GM10248 (cell line): ENCODE measurements at regions of chr11 and their contacts with region 1.

Region 1: GRCh38 chr11:10653926-10654810 is 39.4 kb downstream of the IRAG1 start:
- DNase-seq: peak; percentile 70
- CTCF ChIP-seq: peak; percentile 54

Region 2: GRCh38 chr11:10225553-10225952 is 428.6 kb before region 1 on chr11:
- CTCF ChIA-PET with region 1: no interaction called
- POLR2A ChIA-PET with region 1: no interaction called
- DNase-seq: no peak
- CTCF ChIP-seq: no peak

Region 3: DNA sequence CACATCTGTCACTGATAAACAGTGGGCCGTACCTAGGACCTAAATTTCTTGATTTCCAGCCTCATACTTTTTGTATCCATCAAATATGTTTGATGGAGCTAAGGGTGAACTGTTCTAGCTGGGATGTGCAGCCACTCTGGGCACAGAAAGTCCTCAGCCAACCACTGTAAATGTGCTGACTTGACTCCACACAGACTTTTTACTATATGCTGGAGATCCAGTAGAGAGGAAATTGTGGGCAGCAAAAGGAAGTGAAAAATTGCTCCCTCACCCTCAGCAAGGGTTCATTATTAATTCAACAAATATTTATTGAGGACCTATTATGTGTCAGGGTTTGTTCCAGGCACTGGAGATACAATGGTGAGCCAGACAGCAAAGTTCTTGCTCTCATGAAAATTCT is 253.3 kb before region 1 on chr11:
- CTCF ChIA-PET with region 1: interaction called, 17 read pairs
- POLR2A ChIA-PET with region 1: no interaction called
- DNase-seq: no peak
- CTCF ChIP-seq: no peak

Region 4: DNA sequence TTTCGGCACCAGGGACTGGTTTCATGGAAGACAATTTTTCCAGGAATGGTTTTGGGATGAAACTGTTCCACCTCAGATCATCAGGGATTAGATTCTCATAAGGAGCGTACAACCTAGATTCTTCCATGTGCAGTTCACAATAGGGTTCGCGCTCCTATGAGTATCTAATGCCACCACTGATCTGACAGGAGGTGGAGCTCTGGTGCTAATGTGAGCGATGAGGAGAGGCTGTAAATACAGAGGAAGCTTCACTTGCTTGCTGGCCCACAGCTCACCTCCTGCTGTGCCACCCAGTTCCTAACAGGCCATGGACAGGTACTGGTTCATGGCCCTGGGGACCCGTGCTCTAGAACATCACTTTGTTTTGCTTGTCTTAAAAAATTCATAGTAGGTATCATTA is 240.9 kb before region 1 on chr11:
- CTCF ChIA-PET with region 1: interaction called, 25 read pairs
- POLR2A ChIA-PET with region 1: no interaction called
- DNase-seq: no peak
- CTCF ChIP-seq: peak; percentile 69

Region 5: GRCh38 chr11:10540923-10541560 is 113.1 kb before region 1 on chr11 and contains the start of gene RNF141:
- CTCF ChIA-PET with region 1: interaction called, 24 read pairs
- POLR2A ChIA-PET with region 1: no interaction called
- DNase-seq: peak; percentile 98
- CTCF ChIP-seq: peak; percentile 95

Region 6: GRCh38 chr11:10623797-10624761 is 30.1 kb before region 1 on chr11:
- CTCF ChIA-PET with region 1: interaction called, 50 read pairs
- POLR2A ChIA-PET with region 1: no interaction called
- DNase-seq: peak; percentile 67
- CTCF ChIP-seq: peak; percentile 31

Region 7: GRCh38 chr11:10666556-10667523 is 12.7 kb after region 1 on chr11:
- CTCF ChIA-PET with region 1: interaction called, 37 read pairs
- POLR2A ChIA-PET with region 1: no interaction called
- DNase-seq: no peak
- CTCF ChIP-seq: no peak

Region 8: GRCh38 chr11:10742471-10743208 is 88.5 kb after region 1 on chr11:
- CTCF ChIA-PET with region 1: interaction called, 10 read pairs
- POLR2A ChIA-PET with region 1: no interaction called
- DNase-seq: no peak
- CTCF ChIP-seq: no peak

Region 9: GRCh38 chr11:10990637-10991193 is 336.5 kb after region 1 on chr11:
- CTCF ChIA-PET with region 1: no interaction called
- POLR2A ChIA-PET with region 1: no interaction called
- DNase-seq: no peak
- CTCF ChIP-seq: no peak